CD8-positive, alpha-beta memory T cell (primary cell): ENCODE measurements at regions of chr10 and their contacts with region 1.

Region 1: GRCh38 chr10:63133056-63133820 is at the start of gene NRBF2:
- DNase-seq: peak; percentile 93 to 98 (median 97)
- H3K4me3 ChIP-seq: peak within 1 kb of the TSS; percentile 96
- H3K4me3 Mint-ChIP-seq: peak within 1 kb of the TSS; percentile 90 to 98 (median 93)
- H3K27ac ChIP-seq: peak within 1 kb of the TSS; percentile 98
- H3K27ac Mint-ChIP-seq: peak within 1 kb of the TSS; percentile 87 to 98 (median 96)
- H3K4me1 ChIP-seq: peaks cover 33% of the 10 kb centered on the region
- H3K4me1 Mint-ChIP-seq: peaks cover 30 to 49% (median 39%) of the 10 kb centered on the region in 3 donors
- H3K27me3 ChIP-seq: no peaks in the 10 kb centered on the region
- H3K27me3 Mint-ChIP-seq: peaks cover 2 to 14% of the 10 kb centered on the region in 2 donors
- total RNA-seq, gene NRBF2: 25.0 to 28.3 TPM

Region 2: DNA sequence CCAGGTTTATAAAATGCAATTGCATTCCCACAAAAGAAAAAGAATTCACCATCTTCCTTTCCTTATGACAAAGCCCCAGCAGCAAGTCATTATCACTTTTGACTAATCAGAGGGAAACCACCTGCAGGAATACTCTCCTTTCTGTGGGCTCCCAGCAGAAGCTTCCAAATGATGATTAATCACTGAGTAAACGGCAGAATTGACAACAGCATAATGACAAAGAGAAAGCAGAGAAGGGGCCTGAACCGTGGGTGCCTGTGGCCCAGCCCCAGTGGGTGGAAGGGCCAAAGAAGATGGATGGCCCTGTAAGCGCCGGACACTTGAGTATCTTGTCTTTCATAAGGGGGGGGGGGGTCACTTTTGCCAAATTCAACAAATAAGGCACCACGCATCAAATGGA is 152.6 kb before region 1 on chr10:
- CTCF ChIA-PET with region 1: no interaction called
- POLR2A ChIA-PET with region 1: no interaction called
- DNase-seq: no peak
- H3K4me3 ChIP-seq: no peak overlapping the region
- H3K4me3 Mint-ChIP-seq: no peak overlapping the region
- H3K27ac ChIP-seq: no peak overlapping the region
- H3K27ac Mint-ChIP-seq: no peak overlapping the region
- H3K4me1 ChIP-seq: no peaks in the 10 kb centered on the region
- H3K4me1 Mint-ChIP-seq: no peaks in the 10 kb centered on the region
- H3K27me3 ChIP-seq: no peaks in the 10 kb centered on the region
- H3K27me3 Mint-ChIP-seq: peaks cover 1 to 3% of the 10 kb centered on the region in 2 donors

Region 3: GRCh38 chr10:63106111-63106755 is 27.0 kb before region 1 on chr10:
- CTCF ChIA-PET with region 1: no interaction called
- POLR2A ChIA-PET with region 1: no interaction called
- DNase-seq: no peak
- H3K4me3 ChIP-seq: no peak overlapping the region
- H3K4me3 Mint-ChIP-seq: no peak overlapping the region
- H3K27ac ChIP-seq: no peak overlapping the region
- H3K27ac Mint-ChIP-seq: no peak overlapping the region
- H3K4me1 ChIP-seq: no peaks in the 10 kb centered on the region
- H3K4me1 Mint-ChIP-seq: peaks cover 0 to 5% (median 4%) of the 10 kb centered on the region in 3 donors
- H3K27me3 ChIP-seq: no peaks in the 10 kb centered on the region
- H3K27me3 Mint-ChIP-seq: peaks cover 10 to 47% of the 10 kb centered on the region in 2 donors

Region 4: GRCh38 chr10:63145782-63146181 is 12.5 kb after region 1 on chr10:
- CTCF ChIA-PET with region 1: interaction called, 3 read pairs
- POLR2A ChIA-PET with region 1: interaction called, 10 read pairs
- DNase-seq: no peak
- H3K4me3 ChIP-seq: no peak overlapping the region
- H3K4me3 Mint-ChIP-seq: no peak overlapping the region
- H3K27ac ChIP-seq: no peak overlapping the region
- H3K27ac Mint-ChIP-seq: peak overlapping the region in 3 of 8 donors; percentile 6 to 52 (median 50)
- H3K4me1 ChIP-seq: peaks cover 19% of the 10 kb centered on the region
- H3K4me1 Mint-ChIP-seq: peaks cover 42 to 78% (median 73%) of the 10 kb centered on the region in 3 donors
- H3K27me3 ChIP-seq: no peaks in the 10 kb centered on the region
- H3K27me3 Mint-ChIP-seq: peaks cover 0 to 2% of the 10 kb centered on the region in 2 donors